ENCODE measurements at regions of chr3 and their contacts with region 1.

Region 1: DNA sequence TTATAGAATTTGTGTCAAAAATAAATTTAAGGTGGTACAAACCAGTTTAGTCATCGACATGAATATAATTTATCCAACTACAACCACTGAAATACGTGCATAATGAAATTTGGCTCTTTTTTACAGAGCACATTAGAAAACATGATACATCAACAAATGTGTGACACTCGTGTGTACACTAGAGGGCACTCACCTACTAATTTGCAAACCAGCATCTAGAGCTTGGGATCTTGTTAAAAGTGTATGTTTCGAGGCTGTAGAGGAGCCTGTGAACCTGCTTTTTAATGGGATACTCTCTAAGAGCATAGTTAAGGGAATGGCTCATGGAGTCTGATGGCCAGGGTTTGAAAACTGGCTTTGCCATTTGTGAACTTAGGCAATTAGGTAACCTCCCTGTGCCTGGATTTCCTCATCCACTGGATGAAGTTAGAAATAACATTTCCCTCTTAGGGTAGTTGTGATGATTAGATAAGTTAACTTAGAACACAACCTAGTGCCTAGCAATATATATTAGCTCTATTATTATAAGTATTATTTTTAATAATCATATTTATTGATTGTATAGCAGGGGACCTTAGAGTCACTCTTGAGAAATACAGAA is 8.8 kb upstream of the CPOX start:
- DNase-seq: peak; percentile 71
- ATAC-seq: peak; percentile 96
- H3K4me3 ChIP-seq: no peak overlapping the region
- H3K27ac ChIP-seq: no peak overlapping the region
- H3K4me1 ChIP-seq: no peaks in the 10 kb centered on the region
- H3K27me3 ChIP-seq: no peaks in the 10 kb centered on the region
- CTCF ChIP-seq: peak; percentile 82 to 96 (median 94)
- POLR2A ChIP-seq: no peak
- RAD21 ChIP-seq: peak; percentile 97

Region 2: DNA sequence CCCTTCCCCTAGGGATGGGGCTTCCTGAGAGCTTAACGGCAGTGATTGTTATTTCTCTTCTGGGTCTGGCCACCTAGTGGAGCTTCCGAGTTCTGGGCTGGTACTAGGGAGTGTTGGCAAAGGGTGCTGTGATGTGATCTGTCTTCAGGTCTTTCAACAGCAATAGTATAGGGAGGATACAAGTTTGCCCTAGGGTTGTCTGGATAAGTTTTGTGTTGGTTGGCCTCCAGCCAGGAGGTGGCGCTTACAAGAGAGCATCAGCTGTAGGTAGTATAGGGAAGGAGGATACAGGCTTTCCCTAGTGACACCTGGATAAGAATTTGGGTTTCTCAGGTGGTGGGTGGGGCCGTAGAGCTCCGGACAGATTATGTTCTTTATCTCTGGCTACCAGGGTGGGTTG is 10.4 kb after region 1 on chr3:
- CTCF ChIA-PET with region 1: interaction called, 24 read pairs
- POLR2A ChIA-PET with region 1: no interaction called
- RAD21 ChIA-PET with region 1: no interaction called
- intact Hi-C with region 1: no loop called
- DNase-seq: no peak
- ATAC-seq: peak; percentile 90
- H3K4me3 ChIP-seq: no peak overlapping the region
- H3K27ac ChIP-seq: no peak overlapping the region
- H3K4me1 ChIP-seq: no peaks in the 10 kb centered on the region
- H3K27me3 ChIP-seq: no peaks in the 10 kb centered on the region
- CTCF ChIP-seq: peak in 2 of 3 experiments; percentile 43 to 54; a peak in 4 of 6 replicates
- POLR2A ChIP-seq: no peak
- RAD21 ChIP-seq: no peak

Region 3: GRCh38 chr3:98798820-98799219 is 196.6 kb after region 1 on chr3:
- CTCF ChIA-PET with region 1: interaction called, 18 read pairs
- POLR2A ChIA-PET with region 1: no interaction called
- RAD21 ChIA-PET with region 1: interaction called in 1 of 2 experiments, 5 read pairs
- intact Hi-C with region 1: loop called (anchors 5 kb)
- DNase-seq: no peak
- ATAC-seq: no peak
- H3K4me3 ChIP-seq: no peak overlapping the region
- H3K27ac ChIP-seq: no peak overlapping the region
- H3K4me1 ChIP-seq: no peaks in the 10 kb centered on the region
- H3K27me3 ChIP-seq: no peaks in the 10 kb centered on the region
- CTCF ChIP-seq: no peak
- POLR2A ChIP-seq: no peak
- RAD21 ChIP-seq: no peak

Region 4: DNA sequence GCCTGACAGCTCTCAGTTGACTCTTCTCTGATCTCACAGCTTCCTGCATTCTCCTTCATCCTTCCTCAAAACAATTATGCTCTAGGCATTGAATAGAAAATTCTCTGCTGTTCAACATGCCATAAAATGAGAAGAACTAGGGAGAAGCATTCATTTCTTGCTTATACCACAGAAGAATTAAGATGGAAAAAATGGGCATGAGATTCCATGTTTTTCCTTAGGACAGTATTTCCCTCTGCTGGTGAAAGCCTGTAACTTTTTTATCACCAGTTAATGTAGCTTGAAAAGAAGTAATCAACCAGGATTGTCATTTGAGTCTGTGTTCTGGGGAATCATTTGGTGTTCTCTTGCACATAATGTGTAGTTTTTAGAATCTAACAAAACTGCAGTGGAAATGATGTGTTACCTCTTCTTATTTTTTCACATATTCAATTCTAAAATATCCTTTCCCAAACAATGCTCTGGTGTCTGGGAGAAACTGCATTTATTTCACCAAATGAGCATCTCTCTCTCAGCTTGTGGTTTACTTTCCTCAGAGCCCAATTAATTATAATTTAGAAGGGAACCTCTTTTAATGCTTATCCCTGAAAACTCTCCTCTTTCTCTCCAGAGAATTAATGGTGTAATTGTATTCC is 392.1 kb after region 1 on chr3:
- CTCF ChIA-PET with region 1: interaction called, 17 read pairs
- POLR2A ChIA-PET with region 1: no interaction called
- RAD21 ChIA-PET with region 1: interaction called in 1 of 2 experiments, 4 read pairs
- intact Hi-C with region 1: loop called (anchors 2 kb)
- DNase-seq: peak; percentile 52
- ATAC-seq: peak; percentile 78
- H3K4me3 ChIP-seq: no peak overlapping the region
- H3K27ac ChIP-seq: no peak overlapping the region
- H3K4me1 ChIP-seq: peaks cover 0 to 16% of the 10 kb centered on the region in 2 experiments; a peak in 1 of 4 replicates
- H3K27me3 ChIP-seq: no peaks in the 10 kb centered on the region
- CTCF ChIP-seq: peak; percentile 59 to 84 (median 66); a peak in 5 of 6 replicates
- POLR2A ChIP-seq: no peak
- RAD21 ChIP-seq: peak; percentile 87

Region 5: DNA sequence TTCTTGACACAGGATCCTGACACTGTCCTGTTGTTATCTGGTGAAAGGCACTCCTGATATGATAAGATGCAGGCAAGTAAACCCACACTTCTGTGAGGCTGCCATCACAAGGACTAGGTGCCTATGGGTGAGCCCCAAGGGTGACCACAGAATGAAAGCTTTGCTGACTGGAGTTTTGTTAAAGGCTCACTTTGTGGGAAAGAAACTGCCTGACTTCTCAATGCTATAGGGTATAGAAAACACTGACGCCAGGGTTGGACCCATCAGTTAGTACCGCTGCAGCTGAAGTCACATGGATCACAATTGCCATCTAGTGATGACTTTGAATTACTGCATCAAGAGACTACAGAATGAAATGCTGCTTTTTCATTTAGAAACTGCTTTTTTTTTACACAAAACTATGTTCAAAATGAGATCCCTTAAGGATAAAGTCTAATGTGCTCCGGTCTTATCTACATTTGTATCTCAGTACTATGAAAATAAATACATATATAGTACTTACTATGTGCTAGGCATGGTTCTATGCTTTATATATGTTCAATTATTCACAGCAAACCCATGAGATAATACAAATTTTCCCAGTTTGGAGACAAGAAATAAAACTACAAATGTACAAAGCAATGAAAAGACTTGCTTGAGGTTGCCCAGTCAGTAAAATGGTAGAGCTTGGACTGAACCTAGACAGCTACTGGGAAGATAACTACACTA is 1151.2 kb after region 1 on chr3:
- CTCF ChIA-PET with region 1: no interaction called
- POLR2A ChIA-PET with region 1: interaction called, 3 read pairs
- RAD21 ChIA-PET with region 1: no interaction called
- intact Hi-C with region 1: loop called (anchors 5 kb)
- DNase-seq: peak; percentile 28
- ATAC-seq: peak; percentile 92
- H3K4me3 ChIP-seq: no peak overlapping the region
- H3K27ac ChIP-seq: no peak overlapping the region
- H3K4me1 ChIP-seq: no peaks in the 10 kb centered on the region
- H3K27me3 ChIP-seq: peaks cover 66% of the 10 kb centered on the region
- CTCF ChIP-seq: peak; percentile 37 to 76 (median 68); a peak in 5 of 6 replicates
- POLR2A ChIP-seq: no peak
- RAD21 ChIP-seq: peak; percentile 76

Measured in HCT116 (cell line).